Activated CD8-positive, alpha-beta T cell treated with anti-CD3 and anti-CD28 coated beads, Interleukin-2, amount 10 ng/mL, durations not matched to agents 7 days and 5 days (primary cell): ENCODE measurements at regions of chr14 and their contacts with region 1.

Region 1: GRCh38 chr14:105999361-106000028 is 473.1 kb downstream of the TMEM121 start:
- DNase-seq: peak; percentile 92
- ATAC-seq: peak; percentile 83
- H3K4me3 Mint-ChIP-seq: peak overlapping the region; percentile 31
- H3K27ac Mint-ChIP-seq: peak overlapping the region; percentile 89
- H3K4me1 Mint-ChIP-seq: peaks cover 62% of the 10 kb centered on the region
- H3K27me3 Mint-ChIP-seq: no peaks in the 10 kb centered on the region

Region 2: DNA sequence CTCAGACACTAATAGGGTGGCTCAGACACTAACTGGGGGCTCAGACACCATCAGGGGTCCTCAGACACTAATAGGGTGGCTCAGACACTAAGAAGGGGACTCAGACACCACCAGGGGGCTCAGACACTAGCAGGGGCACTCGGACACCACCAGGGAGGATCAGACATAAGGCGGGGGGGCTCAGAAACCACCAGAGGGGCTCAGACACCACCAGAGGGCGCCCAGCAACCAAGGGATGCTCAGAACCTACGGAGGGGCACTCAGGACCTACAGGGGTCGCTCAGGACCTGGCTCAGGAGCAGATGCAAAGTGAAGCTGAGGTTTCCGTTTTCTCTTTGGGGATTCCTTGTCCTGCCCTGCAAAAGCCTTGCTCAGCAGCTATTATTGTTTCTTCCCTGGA is 24.6 kb before region 1 on chr14:
- CTCF ChIA-PET with region 1: interaction called, 25 read pairs
- POLR2A ChIA-PET with region 1: no interaction called
- DNase-seq: peak; percentile 85
- ATAC-seq: peak; percentile 95
- H3K4me3 Mint-ChIP-seq: no peak overlapping the region
- H3K27ac Mint-ChIP-seq: no peak overlapping the region
- H3K4me1 Mint-ChIP-seq: peaks cover 4% of the 10 kb centered on the region
- H3K27me3 Mint-ChIP-seq: no peaks in the 10 kb centered on the region